ENCODE measurements at regions of chr3 and their contacts with region 1.

Region 1: DNA sequence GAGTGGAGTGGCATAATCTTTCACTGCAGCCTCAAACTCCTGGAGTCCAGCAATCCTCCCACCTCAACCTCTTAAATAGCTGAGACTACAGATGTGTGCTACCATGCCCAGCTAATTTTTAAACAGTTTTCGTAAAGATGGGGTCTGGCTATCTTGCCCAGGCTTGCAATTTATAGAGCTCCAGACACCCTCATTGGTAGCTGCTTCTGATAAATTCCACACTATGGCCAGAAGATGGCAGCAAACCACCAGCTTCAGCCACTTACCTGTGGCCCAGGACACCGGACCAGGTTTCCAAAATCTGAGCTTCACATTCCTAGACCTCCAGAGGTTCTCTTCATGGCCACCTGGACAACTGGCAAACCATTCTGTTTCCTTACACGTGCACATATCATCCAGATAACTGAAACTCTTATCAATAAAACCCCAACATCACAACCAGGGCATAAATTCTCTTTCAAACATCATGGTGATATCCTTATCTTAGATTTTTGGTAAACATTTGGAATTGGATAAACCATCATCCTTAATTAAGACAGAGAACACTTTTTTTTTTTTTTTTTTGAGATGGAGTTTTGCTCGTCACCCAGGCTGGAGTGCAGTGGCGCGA is 28.9 kb downstream of the FBXW12 start:
- DNase-seq: peak; percentile 83
- ATAC-seq: peak; percentile 89
- H3K4me3 ChIP-seq: no peak overlapping the region
- H3K4me3 Mint-ChIP-seq: no peak overlapping the region
- H3K27ac ChIP-seq: no peak overlapping the region
- H3K27ac Mint-ChIP-seq: no peak overlapping the region
- H3K4me1 ChIP-seq: no peaks in the 10 kb centered on the region
- H3K4me1 Mint-ChIP-seq: no peaks in the 10 kb centered on the region
- H3K27me3 ChIP-seq: peaks cover 0 to under 1% (median 0%) of the 10 kb centered on the region in 4 experiments
- H3K27me3 Mint-ChIP-seq: peaks cover 8% of the 10 kb centered on the region
- CTCF ChIP-seq: peak; percentile 93

Region 2: GRCh38 chr3:48232734-48233133 is 168.2 kb before region 1 on chr3:
- CTCF ChIA-PET with region 1: interaction called, 10 read pairs
- POLR2A ChIA-PET with region 1: no interaction called
- intact Hi-C with region 1: no loop called
- DNase-seq: peak; percentile 74
- ATAC-seq: peak; percentile 99
- H3K4me3 ChIP-seq: peak overlapping the region in 1 of 5 experiments; percentile 33
- H3K4me3 Mint-ChIP-seq: peak overlapping the region; percentile 56
- H3K27ac ChIP-seq: no peak overlapping the region
- H3K27ac Mint-ChIP-seq: peak overlapping the region; percentile 42
- H3K4me1 ChIP-seq: peaks cover 14 to 27% of the 10 kb centered on the region in 2 donors
- H3K4me1 Mint-ChIP-seq: peaks cover 29% of the 10 kb centered on the region
- H3K27me3 ChIP-seq: no peaks in the 10 kb centered on the region
- H3K27me3 Mint-ChIP-seq: no peaks in the 10 kb centered on the region
- CTCF ChIP-seq: peak; percentile 68

Region 3: DNA sequence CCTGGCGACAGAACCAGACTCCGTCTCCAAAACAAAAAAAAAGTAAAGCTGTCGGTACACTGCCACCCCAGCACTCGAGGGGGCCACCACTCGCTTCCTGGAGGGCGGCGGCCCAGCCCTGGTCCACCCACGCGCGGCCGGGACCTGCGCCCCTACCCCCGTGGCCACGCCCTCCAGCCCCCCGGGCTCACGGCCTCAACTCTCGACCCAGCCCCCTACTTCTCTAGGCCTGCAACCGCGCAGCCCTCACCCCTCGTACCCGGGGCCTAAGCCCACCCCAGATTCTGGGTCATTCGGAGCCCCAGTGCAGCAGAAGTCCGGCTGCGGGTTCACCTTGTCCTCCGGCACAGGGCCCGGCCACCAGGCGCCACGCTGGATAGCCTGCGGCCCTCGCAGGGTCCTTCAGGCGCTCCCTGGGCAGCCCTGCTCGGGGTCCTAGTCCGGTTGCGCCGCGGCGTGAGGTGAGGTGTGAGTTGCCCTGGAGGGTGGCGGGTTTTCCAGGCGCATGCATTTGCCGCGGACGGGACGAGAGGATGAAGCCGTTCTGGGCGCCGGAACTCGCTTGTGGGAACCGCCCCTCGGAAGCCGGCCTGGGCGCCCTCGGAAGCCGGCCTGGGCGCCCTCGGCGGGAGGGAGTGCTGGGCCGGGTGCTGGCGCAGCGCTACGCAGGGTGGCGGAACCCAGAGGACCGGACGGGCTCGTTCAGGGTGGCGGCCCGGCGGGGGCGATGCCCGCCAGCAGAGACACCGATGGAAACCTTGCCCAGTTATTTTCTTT is 99.7 kb before region 1 on chr3:
- CTCF ChIA-PET with region 1: interaction called, 10 read pairs
- POLR2A ChIA-PET with region 1: no interaction called
- intact Hi-C with region 1: no loop called
- DNase-seq: peak; percentile 94
- ATAC-seq: peak; percentile 91
- H3K4me3 ChIP-seq: peak within 1 kb of the TSS; percentile 41 to 90 (median 82)
- H3K4me3 Mint-ChIP-seq: peak within 1 kb of the TSS; percentile 97
- H3K27ac ChIP-seq: peak within 1 kb of the TSS; percentile 92 to 96
- H3K27ac Mint-ChIP-seq: peak within 1 kb of the TSS; percentile 99
- H3K4me1 ChIP-seq: peaks cover 17 to 25% of the 10 kb centered on the region in 2 donors
- H3K4me1 Mint-ChIP-seq: peaks cover 55% of the 10 kb centered on the region
- H3K27me3 ChIP-seq: no peaks in the 10 kb centered on the region
- H3K27me3 Mint-ChIP-seq: no peaks in the 10 kb centered on the region
- CTCF ChIP-seq: no peak

Region 4: DNA sequence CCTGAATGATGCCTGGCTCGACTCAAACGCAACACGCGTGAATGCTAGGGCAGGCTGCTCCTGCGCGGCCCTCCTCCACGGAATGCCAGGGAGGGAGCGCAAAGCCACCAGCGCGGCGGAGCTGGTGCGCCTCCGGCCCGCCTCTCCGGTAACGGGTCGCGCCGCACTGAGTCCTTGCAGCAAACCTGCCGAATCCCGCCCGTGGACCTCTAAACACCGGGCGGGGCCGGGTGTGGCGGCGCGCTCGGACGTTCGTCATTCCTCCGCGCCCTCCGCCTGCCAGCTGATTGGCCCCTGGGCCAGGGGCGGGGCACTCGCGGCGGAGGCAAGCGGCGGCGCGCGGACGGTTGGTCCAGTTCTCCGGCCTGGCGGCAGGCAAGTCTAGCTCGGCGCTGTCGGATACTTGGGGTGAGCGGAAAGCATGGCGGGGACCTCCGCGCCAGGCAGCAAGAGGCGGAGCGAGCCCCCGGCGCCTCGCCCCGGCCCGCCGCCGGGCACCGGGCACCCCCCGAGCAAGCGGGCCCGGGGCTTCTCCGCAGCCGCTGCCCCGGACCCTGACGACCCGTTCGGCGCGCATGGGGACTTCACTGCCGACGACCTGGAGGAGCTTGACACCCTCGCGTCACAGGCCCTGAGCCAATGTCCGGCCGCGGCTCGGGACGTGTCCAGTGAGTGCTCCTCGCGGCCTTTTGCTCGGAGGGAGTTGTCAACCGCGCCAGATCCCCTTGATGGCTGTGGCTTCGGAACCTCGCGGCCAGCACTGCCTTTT is 45.7 kb after region 1 on chr3 and contains the start of gene ATRIP:
- CTCF ChIA-PET with region 1: interaction called, 10 read pairs
- POLR2A ChIA-PET with region 1: no interaction called
- intact Hi-C with region 1: no loop called
- DNase-seq: peak; percentile 89
- ATAC-seq: peak; percentile 99
- H3K4me3 ChIP-seq: peak within 1 kb of the TSS; percentile 50 to 82 (median 73)
- H3K4me3 Mint-ChIP-seq: peak within 1 kb of the TSS; percentile 91
- H3K27ac ChIP-seq: peak within 1 kb of the TSS; percentile 37 to 69
- H3K27ac Mint-ChIP-seq: peak within 1 kb of the TSS; percentile 91
- H3K4me1 ChIP-seq: peaks cover 20 to 27% of the 10 kb centered on the region in 2 donors
- H3K4me1 Mint-ChIP-seq: peaks cover 37% of the 10 kb centered on the region
- H3K27me3 ChIP-seq: no peaks in the 10 kb centered on the region
- H3K27me3 Mint-ChIP-seq: no peaks in the 10 kb centered on the region
- CTCF ChIP-seq: no peak
- total RNA-seq, gene ATRIP: 11.6 and 14.3 TPM in 2 replicates

Region 5: DNA sequence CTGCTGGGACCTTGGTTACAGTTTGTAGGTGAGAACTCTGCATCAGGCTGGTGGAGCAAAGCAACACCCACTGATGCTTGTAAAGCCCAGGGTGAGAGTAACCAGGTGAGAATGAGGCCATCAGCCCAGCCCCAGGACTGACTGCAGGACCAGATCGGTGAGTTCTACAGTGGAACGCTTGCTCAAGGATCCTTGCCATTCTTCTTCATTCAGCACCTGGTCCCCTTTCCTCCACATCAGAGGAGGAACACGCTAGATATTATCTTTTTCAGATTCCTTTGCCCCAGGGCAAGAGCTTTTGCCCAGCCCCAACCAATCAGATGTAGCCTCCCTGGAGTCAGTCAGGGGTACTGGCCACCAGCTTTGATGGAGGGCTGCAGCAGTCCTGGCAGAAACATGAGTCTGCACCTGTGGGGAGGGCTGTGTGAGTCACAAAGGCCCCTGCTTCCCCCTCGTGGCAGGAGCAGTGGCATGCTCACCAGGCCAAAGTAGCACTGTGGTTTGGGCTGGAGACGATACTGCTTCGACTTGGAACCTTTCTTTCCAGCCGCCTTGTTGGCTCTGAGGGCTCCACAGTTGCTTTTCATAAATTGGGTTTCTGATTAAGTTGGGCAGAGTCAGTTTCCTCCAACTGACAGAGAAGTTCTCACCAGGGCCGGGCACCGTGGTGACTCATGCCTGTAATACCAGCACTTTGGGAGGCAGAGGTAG is 106.6 kb after region 1 on chr3:
- CTCF ChIA-PET with region 1: interaction called, 130 read pairs
- POLR2A ChIA-PET with region 1: no interaction called
- intact Hi-C with region 1: no loop called
- DNase-seq: peak; percentile 83
- ATAC-seq: peak; percentile 87
- H3K4me3 ChIP-seq: no peak overlapping the region
- H3K4me3 Mint-ChIP-seq: peak overlapping the region; percentile 32
- H3K27ac ChIP-seq: no peak overlapping the region
- H3K27ac Mint-ChIP-seq: peak overlapping the region; percentile 65
- H3K4me1 ChIP-seq: peaks cover 14 to 25% of the 10 kb centered on the region in 2 donors
- H3K4me1 Mint-ChIP-seq: peaks cover 23% of the 10 kb centered on the region
- H3K27me3 ChIP-seq: peaks cover 0 to 2% (median 0%) of the 10 kb centered on the region in 4 experiments
- H3K27me3 Mint-ChIP-seq: peaks cover 3% of the 10 kb centered on the region
- CTCF ChIP-seq: peak; percentile 84

Region 6: GRCh38 chr3:48609088-48610005 is 208.4 kb after region 1 on chr3 and contains the start of gene UQCRC1:
- CTCF ChIA-PET with region 1: interaction called, 35 read pairs
- POLR2A ChIA-PET with region 1: no interaction called
- intact Hi-C with region 1: loop called (anchors 1 kb)
- DNase-seq: peak; percentile 95
- ATAC-seq: peak; percentile 99
- H3K4me3 ChIP-seq: peak within 1 kb of the TSS; percentile 68 to 99 (median 94)
- H3K4me3 Mint-ChIP-seq: peak within 1 kb of the TSS; percentile 100
- H3K27ac ChIP-seq: peak within 1 kb of the TSS; percentile 72 to 90
- H3K27ac Mint-ChIP-seq: peak within 1 kb of the TSS; percentile 98
- H3K4me1 ChIP-seq: peaks cover 10 to 14% of the 10 kb centered on the region in 2 donors
- H3K4me1 Mint-ChIP-seq: peaks cover 15% of the 10 kb centered on the region
- H3K27me3 ChIP-seq: no peaks in the 10 kb centered on the region
- H3K27me3 Mint-ChIP-seq: no peaks in the 10 kb centered on the region
- CTCF ChIP-seq: peak; percentile 81
- total RNA-seq, gene UQCRC1: 98.9 and 99.9 TPM in 2 replicates

Measured in B cell (primary cell).